ENCODE measurements at regions of chr7 and their contacts with region 1.

Region 1: GRCh38 chr7:7099584-7100014 is 82.7 kb upstream of the C1GALT1 start:
- DNase-seq: peak; percentile 59
- ATAC-seq: peak; percentile 90
- H3K4me3 ChIP-seq: no peak overlapping the region
- H3K27ac ChIP-seq: no peak overlapping the region
- H3K4me1 ChIP-seq: peaks cover 26% of the 10 kb centered on the region
- H3K27me3 ChIP-seq: no peaks in the 10 kb centered on the region
- CTCF ChIP-seq: no peak

Region 2: GRCh38 chr7:7535691-7536090 is 436.1 kb after region 1 on chr7 and contains the start of gene COL28A1:
- intact Hi-C with region 1: loop called (anchors 10 kb)
- DNase-seq: no peak
- ATAC-seq: no peak
- H3K4me3 ChIP-seq: no peak within 1 kb of the TSS
- H3K27ac ChIP-seq: no peak within 1 kb of the TSS
- H3K4me1 ChIP-seq: no peaks in the 10 kb centered on the region
- H3K27me3 ChIP-seq: no peaks in the 10 kb centered on the region
- CTCF ChIP-seq: no peak
- total RNA-seq, gene COL28A1: 2.0 TPM

Region 3: GRCh38 chr7:7869036-7869435 is 769.4 kb after region 1 on chr7:
- intact Hi-C with region 1: no loop called
- DNase-seq: no peak
- ATAC-seq: peak; percentile 11 to 32
- H3K4me3 ChIP-seq: no peak overlapping the region
- H3K27ac ChIP-seq: no peak overlapping the region
- H3K4me1 ChIP-seq: peaks cover 15% of the 10 kb centered on the region
- H3K27me3 ChIP-seq: no peaks in the 10 kb centered on the region
- CTCF ChIP-seq: no peak